HCT116 (cell line): ENCODE measurements at regions of chr1 and their contacts with region 1.

Region 1: GRCh38 chr1:15046487-15047165 is 106.9 kb upstream of the TMEM51 start:
- DNase-seq: peak; percentile 33
- ATAC-seq: peak; percentile 87
- H3K4me3 ChIP-seq: no peak overlapping the region
- H3K27ac ChIP-seq: no peak overlapping the region
- H3K4me1 ChIP-seq: no peaks in the 10 kb centered on the region
- H3K27me3 ChIP-seq: no peaks in the 10 kb centered on the region
- CTCF ChIP-seq: peak; percentile 73 to 93 (median 91)
- POLR2A ChIP-seq: no peak
- RAD21 ChIP-seq: peak; percentile 94

Region 2: DNA sequence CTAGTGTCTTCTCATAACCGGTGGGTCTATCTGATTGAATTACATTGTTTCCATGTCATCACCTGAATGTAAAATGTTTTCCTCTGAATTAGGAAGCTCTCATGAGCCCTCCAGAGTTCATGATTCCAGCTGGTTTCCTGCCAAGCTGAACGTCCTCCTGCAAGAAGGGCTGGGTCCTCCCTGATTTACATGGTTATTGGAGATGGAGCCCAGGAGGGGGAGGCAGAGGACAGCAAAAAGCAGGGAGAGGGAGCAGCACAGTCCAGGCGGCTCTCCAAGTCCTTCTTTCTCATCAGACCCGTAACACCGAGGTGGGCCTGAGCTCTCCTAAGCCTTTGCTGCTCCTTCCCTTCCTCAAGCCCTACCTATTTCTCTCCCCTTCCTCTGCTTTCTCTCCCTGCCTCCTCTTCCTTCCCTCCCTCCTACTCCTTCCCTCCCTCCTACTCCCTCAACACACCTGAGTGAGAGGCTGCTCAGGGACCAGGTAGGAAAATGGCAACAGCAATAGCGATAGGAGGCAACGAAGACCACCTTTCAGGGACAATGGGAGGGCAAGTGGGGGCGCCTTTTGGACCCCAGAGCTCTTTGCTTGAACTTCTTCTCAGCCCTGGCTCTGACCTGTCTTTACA is 1080.7 kb before region 1 on chr1:
- CTCF ChIA-PET with region 1: no interaction called
- POLR2A ChIA-PET with region 1: no interaction called
- RAD21 ChIA-PET with region 1: no interaction called
- intact Hi-C with region 1: loop called (anchors 5 kb)
- DNase-seq: peak; percentile 43
- ATAC-seq: peak; percentile 94
- H3K4me3 ChIP-seq: no peak overlapping the region
- H3K27ac ChIP-seq: no peak overlapping the region
- H3K4me1 ChIP-seq: no peaks in the 10 kb centered on the region
- H3K27me3 ChIP-seq: peaks cover 35% of the 10 kb centered on the region; the same call in 1 of the 2 replicates
- CTCF ChIP-seq: peak; percentile 42 to 58 (median 55)
- POLR2A ChIP-seq: no peak
- RAD21 ChIP-seq: peak; percentile 89

Region 3: GRCh38 chr1:14113841-14114567 is 932.6 kb before region 1 on chr1:
- CTCF ChIA-PET with region 1: no interaction called
- POLR2A ChIA-PET with region 1: no interaction called
- RAD21 ChIA-PET with region 1: no interaction called
- intact Hi-C with region 1: loop called (anchors 5 kb)
- DNase-seq: no peak
- ATAC-seq: peak; percentile 69
- H3K4me3 ChIP-seq: no peak overlapping the region
- H3K27ac ChIP-seq: no peak overlapping the region
- H3K4me1 ChIP-seq: no peaks in the 10 kb centered on the region
- H3K27me3 ChIP-seq: no peaks in the 10 kb centered on the region; the same call in 1 of the 2 replicates
- CTCF ChIP-seq: peak; percentile 27 to 49 (median 44); a peak in 4 of 6 replicates
- POLR2A ChIP-seq: no peak
- RAD21 ChIP-seq: peak; percentile 63

Region 4: GRCh38 chr1:14435368-14436023 is 611.1 kb before region 1 on chr1:
- CTCF ChIA-PET with region 1: no interaction called
- POLR2A ChIA-PET with region 1: no interaction called
- RAD21 ChIA-PET with region 1: no interaction called
- intact Hi-C with region 1: loop called (anchors 1 kb)
- DNase-seq: no peak
- ATAC-seq: peak; percentile 87
- H3K4me3 ChIP-seq: no peak overlapping the region
- H3K27ac ChIP-seq: no peak overlapping the region
- H3K4me1 ChIP-seq: no peaks in the 10 kb centered on the region
- H3K27me3 ChIP-seq: no peaks in the 10 kb centered on the region
- CTCF ChIP-seq: peak; percentile 42 to 56 (median 53); a peak in 5 of 6 replicates
- POLR2A ChIP-seq: no peak
- RAD21 ChIP-seq: peak; percentile 50; the same call in 1 of the 2 replicates

Region 5: DNA sequence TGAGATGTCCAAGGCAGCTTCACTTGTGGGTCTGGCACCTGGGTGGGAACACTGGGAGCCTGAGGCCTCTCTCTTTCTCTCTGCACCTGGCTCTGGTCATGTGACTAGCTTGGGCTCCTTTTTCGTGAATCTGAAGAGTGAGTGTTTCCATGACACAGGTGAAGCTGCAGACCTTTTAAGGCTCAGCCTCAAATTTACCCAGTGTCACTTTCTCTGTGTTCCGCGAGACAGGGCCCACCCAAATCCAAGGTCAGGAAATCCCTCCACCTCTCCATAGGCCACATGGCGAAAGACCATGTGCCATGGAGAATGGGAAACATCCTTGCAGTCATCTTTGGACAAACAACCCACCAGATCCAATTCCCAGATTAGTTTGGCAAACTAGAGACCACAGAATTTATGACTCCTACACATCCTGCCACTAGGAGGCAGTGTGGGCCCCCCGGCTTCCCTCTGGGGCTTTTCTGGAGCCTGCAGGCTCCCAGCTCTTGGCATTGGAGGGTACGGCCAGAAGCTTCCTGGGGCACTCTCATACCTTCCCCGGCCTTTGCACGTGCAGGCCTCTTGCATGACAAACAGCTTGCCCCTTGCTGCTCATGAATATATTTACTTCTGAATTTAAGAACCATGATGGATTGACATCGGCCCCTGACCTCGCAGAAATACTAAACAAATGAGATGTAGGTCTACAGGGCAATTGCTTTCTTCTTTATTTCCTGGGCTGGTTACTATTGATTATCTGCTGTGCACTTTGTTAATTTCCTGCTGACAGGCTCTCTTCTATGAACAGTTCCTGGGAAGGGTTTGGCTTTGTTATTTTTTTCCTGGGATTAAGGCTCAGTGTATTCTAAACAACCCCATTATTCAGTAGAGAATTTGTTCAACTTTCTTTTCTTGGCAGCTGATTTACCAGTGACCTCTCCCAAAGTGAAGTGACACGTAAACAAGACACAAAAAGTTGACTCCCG is 267.4 kb before region 1 on chr1:
- CTCF ChIA-PET with region 1: no interaction called
- POLR2A ChIA-PET with region 1: no interaction called
- RAD21 ChIA-PET with region 1: no interaction called
- intact Hi-C with region 1: loop called (anchors 2 kb)
- DNase-seq: peak; percentile 21
- ATAC-seq: peak; percentile 83
- H3K4me3 ChIP-seq: no peak overlapping the region
- H3K27ac ChIP-seq: no peak overlapping the region
- H3K4me1 ChIP-seq: no peaks in the 10 kb centered on the region
- H3K27me3 ChIP-seq: no peaks in the 10 kb centered on the region
- CTCF ChIP-seq: peak; percentile 74 to 92 (median 90)
- POLR2A ChIP-seq: no peak
- RAD21 ChIP-seq: peak; percentile 69